B cell (primary cell): ENCODE measurements at regions of chr5 and their contacts with region 1.

Region 1: DNA sequence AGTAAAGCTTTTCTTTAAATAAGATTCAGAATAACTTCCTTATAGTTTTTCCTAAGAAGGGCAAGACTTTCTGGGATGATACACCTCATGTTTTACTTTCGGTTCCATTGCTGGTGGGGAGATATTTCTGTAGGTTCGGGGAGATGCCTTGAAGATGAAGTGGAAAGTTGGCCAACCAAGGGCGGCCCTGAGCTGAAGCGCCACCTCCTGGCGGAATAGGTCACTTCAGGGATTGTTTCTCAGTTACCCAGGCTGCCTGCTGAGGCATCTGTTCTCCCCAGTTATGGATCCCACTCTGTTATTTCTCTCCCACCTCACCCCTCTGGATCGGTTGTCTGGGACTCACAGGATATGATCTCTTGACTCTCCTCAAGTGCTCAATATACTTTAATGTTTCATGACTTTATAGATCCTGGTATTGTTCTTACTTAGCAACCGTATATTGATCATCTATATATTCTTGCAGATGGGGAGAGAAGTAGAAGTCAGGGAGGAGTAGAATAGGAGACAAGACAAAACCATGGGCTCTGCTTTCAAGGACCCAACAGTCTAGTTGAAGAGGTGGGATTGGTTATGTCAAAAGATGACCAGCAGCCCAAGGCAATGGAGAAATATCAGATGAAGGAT is 23.4 kb downstream of the MEGF10 start:
- DNase-seq: peak; percentile 72
- ATAC-seq: peak; percentile 62
- H3K4me3 ChIP-seq: no peak overlapping the region
- H3K4me3 Mint-ChIP-seq: no peak overlapping the region
- H3K27ac ChIP-seq: no peak overlapping the region
- H3K27ac Mint-ChIP-seq: no peak overlapping the region
- H3K4me1 ChIP-seq: no peaks in the 10 kb centered on the region
- H3K4me1 Mint-ChIP-seq: peaks cover 2% of the 10 kb centered on the region
- H3K27me3 ChIP-seq: no peaks in the 10 kb centered on the region
- H3K27me3 Mint-ChIP-seq: peaks cover 16% of the 10 kb centered on the region
- CTCF ChIP-seq: peak; percentile 96

Region 2: GRCh38 chr5:126100767-126101166 is 1213.2 kb before region 1 on chr5:
- CTCF ChIA-PET with region 1: no interaction called
- POLR2A ChIA-PET with region 1: no interaction called
- intact Hi-C with region 1: no loop called
- DNase-seq: no peak
- ATAC-seq: no peak
- H3K4me3 ChIP-seq: no peak overlapping the region
- H3K4me3 Mint-ChIP-seq: no peak overlapping the region
- H3K27ac ChIP-seq: no peak overlapping the region
- H3K27ac Mint-ChIP-seq: no peak overlapping the region
- H3K4me1 ChIP-seq: no peaks in the 10 kb centered on the region
- H3K4me1 Mint-ChIP-seq: no peaks in the 10 kb centered on the region
- H3K27me3 ChIP-seq: no peaks in the 10 kb centered on the region
- H3K27me3 Mint-ChIP-seq: peaks cover 12% of the 10 kb centered on the region
- CTCF ChIP-seq: no peak

Region 3: GRCh38 chr5:126656396-126657007 is 657.5 kb before region 1 on chr5:
- CTCF ChIA-PET with region 1: interaction called, 6 read pairs
- POLR2A ChIA-PET with region 1: no interaction called
- intact Hi-C with region 1: loop called (anchors 1 kb)
- DNase-seq: peak; percentile 53
- ATAC-seq: peak; percentile 28
- H3K4me3 ChIP-seq: no peak overlapping the region
- H3K4me3 Mint-ChIP-seq: no peak overlapping the region
- H3K27ac ChIP-seq: no peak overlapping the region
- H3K27ac Mint-ChIP-seq: no peak overlapping the region
- H3K4me1 ChIP-seq: no peaks in the 10 kb centered on the region
- H3K4me1 Mint-ChIP-seq: peaks cover 5% of the 10 kb centered on the region
- H3K27me3 ChIP-seq: no peaks in the 10 kb centered on the region
- H3K27me3 Mint-ChIP-seq: peaks cover 3% of the 10 kb centered on the region
- CTCF ChIP-seq: peak; percentile 89

Region 4: DNA sequence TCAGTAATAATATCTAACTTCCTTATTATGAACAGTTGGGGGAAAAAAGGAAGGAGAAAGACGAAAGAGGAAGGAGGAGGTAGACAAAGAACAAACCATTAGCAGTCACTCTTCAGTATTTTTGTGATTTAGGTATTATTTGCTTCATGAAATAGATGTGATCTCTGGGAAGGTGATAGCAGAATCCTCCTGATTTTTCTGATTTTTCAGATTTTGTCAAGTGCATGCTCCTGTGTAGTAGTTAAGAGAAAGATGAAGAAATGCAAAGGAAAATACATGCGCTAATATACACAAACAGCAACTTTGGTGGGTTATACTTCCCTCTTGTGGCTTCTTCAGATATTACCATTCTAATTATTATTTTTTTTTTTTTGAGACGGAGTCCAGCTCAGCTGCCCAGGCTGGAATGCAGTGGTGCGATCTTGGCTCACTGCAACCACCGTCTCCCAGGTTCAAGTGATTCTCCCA is 505.4 kb before region 1 on chr5:
- CTCF ChIA-PET with region 1: interaction called, 5 read pairs
- POLR2A ChIA-PET with region 1: no interaction called
- intact Hi-C with region 1: loop called (anchors 10 kb)
- DNase-seq: peak; percentile 73
- ATAC-seq: peak; percentile 59
- H3K4me3 ChIP-seq: peak overlapping the region; percentile 8 to 61 (median 33)
- H3K4me3 Mint-ChIP-seq: peak overlapping the region; percentile 79
- H3K27ac ChIP-seq: peak overlapping the region; percentile 60 to 77
- H3K27ac Mint-ChIP-seq: peak overlapping the region; percentile 84
- H3K4me1 ChIP-seq: peaks cover 15 to 35% of the 10 kb centered on the region in 2 donors
- H3K4me1 Mint-ChIP-seq: peaks cover 55% of the 10 kb centered on the region
- H3K27me3 ChIP-seq: no peaks in the 10 kb centered on the region
- H3K27me3 Mint-ChIP-seq: no peaks in the 10 kb centered on the region
- CTCF ChIP-seq: peak; percentile 79

Region 5: GRCh38 chr5:126837906-126838539 is 475.9 kb before region 1 on chr5:
- CTCF ChIA-PET with region 1: interaction called, 71 read pairs
- POLR2A ChIA-PET with region 1: no interaction called
- intact Hi-C with region 1: loop called (anchors 1 kb)
- DNase-seq: peak; percentile 51
- ATAC-seq: peak; percentile 45
- H3K4me3 ChIP-seq: no peak overlapping the region
- H3K4me3 Mint-ChIP-seq: no peak overlapping the region
- H3K27ac ChIP-seq: no peak overlapping the region
- H3K27ac Mint-ChIP-seq: no peak overlapping the region
- H3K4me1 ChIP-seq: no peaks in the 10 kb centered on the region
- H3K4me1 Mint-ChIP-seq: no peaks in the 10 kb centered on the region
- H3K27me3 ChIP-seq: no peaks in the 10 kb centered on the region
- H3K27me3 Mint-ChIP-seq: no peaks in the 10 kb centered on the region
- CTCF ChIP-seq: peak; percentile 66

Region 6: GRCh38 chr5:127040796-127041520 is 273.0 kb before region 1 on chr5:
- CTCF ChIA-PET with region 1: no interaction called
- POLR2A ChIA-PET with region 1: no interaction called
- intact Hi-C with region 1: loop called (anchors 10 kb)
- DNase-seq: no peak
- ATAC-seq: no peak
- H3K4me3 ChIP-seq: no peak overlapping the region
- H3K4me3 Mint-ChIP-seq: no peak overlapping the region
- H3K27ac ChIP-seq: no peak overlapping the region
- H3K27ac Mint-ChIP-seq: no peak overlapping the region
- H3K4me1 ChIP-seq: no peaks in the 10 kb centered on the region
- H3K4me1 Mint-ChIP-seq: peaks cover 6% of the 10 kb centered on the region
- H3K27me3 ChIP-seq: no peaks in the 10 kb centered on the region
- H3K27me3 Mint-ChIP-seq: no peaks in the 10 kb centered on the region
- CTCF ChIP-seq: no peak

Region 7: GRCh38 chr5:127176769-127177168 is 137.2 kb before region 1 on chr5:
- CTCF ChIA-PET with region 1: no interaction called
- POLR2A ChIA-PET with region 1: no interaction called
- intact Hi-C with region 1: no loop called
- DNase-seq: no peak
- ATAC-seq: no peak
- H3K4me3 ChIP-seq: no peak overlapping the region
- H3K4me3 Mint-ChIP-seq: no peak overlapping the region
- H3K27ac ChIP-seq: no peak overlapping the region
- H3K27ac Mint-ChIP-seq: no peak overlapping the region
- H3K4me1 ChIP-seq: no peaks in the 10 kb centered on the region
- H3K4me1 Mint-ChIP-seq: no peaks in the 10 kb centered on the region
- H3K27me3 ChIP-seq: peaks cover 0 to 3% (median under 1%) of the 10 kb centered on the region in 4 experiments
- H3K27me3 Mint-ChIP-seq: peaks cover 30% of the 10 kb centered on the region
- CTCF ChIP-seq: no peak